ENCODE measurements at regions of chr1 and their contacts with region 1.

Region 1: DNA sequence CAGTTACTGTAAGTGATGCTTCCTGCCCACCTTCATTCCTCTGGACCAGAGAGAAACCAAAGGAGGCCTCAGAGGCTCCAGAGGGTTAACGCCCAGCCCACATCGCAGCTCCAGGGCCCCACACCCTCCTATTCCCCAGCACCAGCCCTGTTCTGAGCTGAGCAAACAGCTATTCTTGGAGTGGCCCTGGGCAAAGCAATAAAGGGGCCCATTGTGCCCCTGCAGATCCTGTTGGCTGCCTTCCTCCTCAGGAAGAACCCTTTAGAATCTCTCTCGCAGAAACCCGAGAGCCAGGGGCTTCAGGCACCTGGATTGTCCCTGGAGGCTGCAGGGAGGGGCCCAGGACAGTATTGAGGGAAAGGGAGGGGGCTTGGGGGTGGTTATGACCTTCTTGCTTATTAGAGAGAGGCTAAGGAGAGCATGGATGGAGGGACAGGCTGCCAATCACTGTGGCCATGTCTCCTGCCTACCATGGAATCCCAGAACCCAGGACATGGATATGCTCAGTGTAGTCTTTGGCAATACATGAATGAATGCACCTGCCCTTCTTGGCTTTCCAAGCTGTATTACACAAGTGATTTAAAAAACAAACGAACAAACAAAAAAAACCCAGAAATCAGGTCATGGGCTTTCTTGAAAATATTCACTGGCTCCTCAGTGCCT is 9.2 kb downstream of the PADI2 start:
- DNase-seq: peak in 9 of 10 donors; percentile 58 to 88 (median 81)
- H3K4me3 ChIP-seq: peak overlapping the region in 12 of 59 donors; percentile 2 to 17 (median 8)
- H3K27ac ChIP-seq: peak overlapping the region; percentile 41 to 99 (median 93)
- H3K27me3 ChIP-seq: no peaks in the 10 kb centered on the region
- CTCF ChIP-seq: peak in 5 of 56 donors; percentile 7 to 22 (median 11)

Region 2: DNA sequence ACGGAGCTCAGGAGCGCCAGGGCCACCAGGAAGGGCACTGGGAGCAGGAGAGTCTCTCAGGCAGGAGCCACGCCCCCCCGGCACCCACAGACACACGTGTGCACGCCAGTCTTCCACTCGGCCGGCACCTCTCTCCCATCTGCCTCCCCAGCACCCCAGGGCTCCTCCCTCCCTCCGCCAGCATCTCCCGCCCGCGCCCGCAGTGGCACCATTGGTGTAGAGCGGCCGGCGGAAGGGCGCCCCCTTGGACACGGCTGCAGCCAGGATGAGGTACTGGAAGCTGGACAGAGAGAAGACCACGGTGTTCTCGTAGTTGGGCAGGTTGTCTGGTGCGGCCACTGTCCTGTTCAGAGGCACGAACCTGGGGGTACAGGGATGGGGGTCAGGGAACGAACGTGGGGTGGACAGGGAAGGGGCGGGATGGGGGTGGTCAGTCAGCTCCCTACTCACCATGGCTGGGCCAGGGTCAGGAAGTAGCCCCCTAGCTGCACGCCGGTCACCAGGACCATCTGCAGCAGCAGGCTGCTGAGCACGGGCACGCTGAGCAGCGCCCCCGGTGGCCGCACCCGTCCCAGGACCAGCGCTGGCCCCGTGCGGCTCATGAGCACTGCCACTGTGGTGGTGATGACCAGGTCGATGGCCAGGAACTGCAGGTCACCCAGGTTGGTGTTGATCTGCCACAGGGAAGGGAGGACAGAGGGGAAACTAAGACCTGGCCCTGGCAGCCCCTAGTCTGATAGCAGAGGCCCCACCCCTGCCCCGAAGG is 123.2 kb before region 1 on chr1:
- intact Hi-C with region 1: no loop called
- DNase-seq: no peak
- H3K4me3 ChIP-seq: no peak overlapping the region
- H3K27ac ChIP-seq: peak overlapping the region in 1 of 59 donors; percentile 18
- H3K27me3 ChIP-seq: no peaks in the 10 kb centered on the region
- CTCF ChIP-seq: peak in 12 of 56 donors; percentile 7 to 46 (median 16)

Region 3: GRCh38 chr1:17089506-17089905 is 20.5 kb before region 1 on chr1:
- intact Hi-C with region 1: loop called in 1 of 2 experiments (anchors 2 kb)
- DNase-seq: peak; percentile 19 to 92 (median 89)
- H3K4me3 ChIP-seq: peak overlapping the region in 2 of 59 donors; percentile 14 to 20
- H3K27ac ChIP-seq: peak overlapping the region; percentile 83 to 100 (median 98)
- H3K27me3 ChIP-seq: no peaks in the 10 kb centered on the region
- CTCF ChIP-seq: peak in 9 of 56 donors; percentile 7 to 28 (median 18)

Measured in dorsolateral prefrontal cortex (tissue), 120 donors.